Transverse colon (tissue), 4 donors: ENCODE measurements at regions of chr13 and their contacts with region 1.

Region 1: GRCh38 chr13:51840917-51841316 is 4.1 kb downstream of the TMEM272 start:
- DNase-seq: no peak
- H3K4me3 ChIP-seq: no peak overlapping the region
- H3K27ac ChIP-seq: no peak overlapping the region
- H3K4me1 ChIP-seq: peaks cover 0 to 3% (median 0%) of the 10 kb centered on the region in 4 donors
- H3K27me3 ChIP-seq: no peaks in the 10 kb centered on the region
- CTCF ChIP-seq: no peak
- EP300 ChIP-seq: no peak
- POLR2A ChIP-seq: no peak

Region 2: GRCh38 chr13:50685491-50685890 is 1155.4 kb before region 1 on chr13:
- in situ Hi-C with region 1: no loop called
- intact Hi-C with region 1: no loop called
- DNase-seq: peak; percentile 41
- H3K4me3 ChIP-seq: no peak overlapping the region
- H3K27ac ChIP-seq: peak overlapping the region in 2 of 4 donors; percentile 1 to 24
- H3K4me1 ChIP-seq: peaks cover 0 to 9% (median 1%) of the 10 kb centered on the region in 4 donors
- H3K27me3 ChIP-seq: no peaks in the 10 kb centered on the region
- CTCF ChIP-seq: no peak
- EP300 ChIP-seq: no peak
- POLR2A ChIP-seq: no peak

Region 3: DNA sequence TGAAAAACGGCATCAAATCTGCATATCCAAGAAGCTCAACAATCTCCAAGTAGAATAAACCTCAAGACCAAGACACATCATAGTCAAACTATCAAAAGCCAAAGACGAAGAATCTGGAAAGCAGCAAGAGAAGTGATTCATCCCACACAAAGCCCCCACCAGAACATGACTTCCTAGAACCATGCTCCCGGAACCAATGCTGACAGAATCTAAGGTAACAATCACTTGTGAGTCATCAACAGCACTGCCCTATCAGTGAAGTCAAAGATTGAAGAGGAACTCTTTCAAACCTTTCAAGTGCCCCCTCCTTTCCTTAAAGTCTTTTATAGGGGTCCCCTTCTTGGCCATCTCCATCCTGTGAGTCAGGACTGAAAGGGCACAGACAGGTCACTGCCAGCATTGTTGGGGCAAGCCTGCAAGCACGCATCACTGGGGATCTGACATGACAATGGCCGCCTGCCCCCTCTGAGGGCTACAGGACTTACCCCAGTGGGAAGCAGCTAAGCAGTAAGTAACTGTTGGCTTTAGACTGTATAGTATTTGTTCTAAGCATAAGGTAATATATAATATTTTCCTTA is 20.9 kb after region 1 on chr13 and contains the start of gene CCDC70:
- in situ Hi-C with region 1: no loop called
- intact Hi-C with region 1: loop called (anchors 1 kb)
- DNase-seq: no peak
- H3K4me3 ChIP-seq: no peak within 1 kb of the TSS
- H3K27ac ChIP-seq: no peak within 1 kb of the TSS
- H3K4me1 ChIP-seq: no peaks in the 10 kb centered on the region
- H3K27me3 ChIP-seq: no peaks in the 10 kb centered on the region
- CTCF ChIP-seq: no peak
- EP300 ChIP-seq: no peak
- POLR2A ChIP-seq: no peak
- total RNA-seq, gene CCDC70: not detected